B cell (primary cell): ENCODE measurements at regions of chr4 and their contacts with region 1.

Region 1: DNA sequence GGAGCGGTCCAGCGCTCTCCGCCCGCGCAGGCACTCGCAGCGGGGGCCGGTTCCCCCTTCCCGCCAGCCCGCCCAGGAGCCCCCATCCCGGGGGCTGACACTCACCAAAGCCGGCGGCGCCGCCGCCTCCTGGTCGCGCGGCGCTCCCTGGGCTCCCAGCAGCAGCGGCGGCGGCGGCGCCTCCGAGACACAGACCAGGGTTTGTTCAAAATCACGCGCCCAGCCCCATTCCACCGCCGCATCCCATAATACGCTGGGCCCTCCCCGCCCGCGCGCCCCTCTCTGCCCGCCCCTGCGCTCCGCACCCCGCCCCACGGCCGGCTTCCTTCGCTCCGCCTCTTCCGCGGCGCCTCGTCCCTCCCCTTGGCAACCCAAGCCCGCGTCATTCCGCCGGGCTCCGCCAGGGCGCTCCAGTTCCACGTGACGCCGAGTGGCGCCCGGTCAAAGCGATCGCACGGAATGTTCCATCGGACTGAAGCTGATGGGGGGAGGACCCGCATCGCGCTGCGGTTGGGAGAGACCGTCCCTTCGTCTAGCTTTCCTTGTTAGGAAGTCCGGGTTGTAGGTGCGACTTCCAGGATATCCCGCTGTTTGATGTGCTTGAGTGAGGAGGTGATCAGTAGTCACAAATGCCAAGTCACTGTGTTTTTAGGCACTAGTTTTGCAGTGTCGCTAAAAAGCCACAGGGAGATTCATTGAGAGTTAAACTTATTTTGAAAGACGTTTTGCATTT is 2.2 kb upstream of the LIN54 start:
- DNase-seq: peak; percentile 99
- ATAC-seq: peak; percentile 89
- H3K4me3 ChIP-seq: peak overlapping the region; percentile 56 to 87 (median 79)
- H3K4me3 Mint-ChIP-seq: peak overlapping the region; percentile 92
- H3K27ac ChIP-seq: peak overlapping the region; percentile 37 to 72
- H3K27ac Mint-ChIP-seq: peak overlapping the region; percentile 91
- H3K4me1 ChIP-seq: peaks cover 24 to 33% of the 10 kb centered on the region in 2 donors
- H3K4me1 Mint-ChIP-seq: peaks cover 43% of the 10 kb centered on the region
- H3K27me3 ChIP-seq: no peaks in the 10 kb centered on the region
- H3K27me3 Mint-ChIP-seq: no peaks in the 10 kb centered on the region
- CTCF ChIP-seq: peak; percentile 59

Region 2: GRCh38 chr4:82428969-82429727 is 583.7 kb before region 1 on chr4:
- CTCF ChIA-PET with region 1: no interaction called
- POLR2A ChIA-PET with region 1: interaction called, 3 read pairs
- intact Hi-C with region 1: loop called (anchors 1 kb)
- DNase-seq: peak; percentile 97
- ATAC-seq: peak; percentile 64
- H3K4me3 ChIP-seq: peak overlapping the region; percentile 98 to 99 (median 98)
- H3K4me3 Mint-ChIP-seq: peak overlapping the region; percentile 100
- H3K27ac ChIP-seq: peak overlapping the region; percentile 96 to 100
- H3K27ac Mint-ChIP-seq: peak overlapping the region; percentile 100
- H3K4me1 ChIP-seq: peaks cover 27 to 32% of the 10 kb centered on the region in 2 donors
- H3K4me1 Mint-ChIP-seq: peaks cover 48% of the 10 kb centered on the region
- H3K27me3 ChIP-seq: no peaks in the 10 kb centered on the region
- H3K27me3 Mint-ChIP-seq: no peaks in the 10 kb centered on the region
- CTCF ChIP-seq: peak; percentile 97

Region 3: GRCh38 chr4:82890901-82891706 is 121.7 kb before region 1 on chr4 and contains the start of gene SEC31A:
- CTCF ChIA-PET with region 1: no interaction called
- POLR2A ChIA-PET with region 1: no interaction called
- intact Hi-C with region 1: loop called (anchors 1 kb)
- DNase-seq: peak; percentile 98
- ATAC-seq: peak; percentile 92
- H3K4me3 ChIP-seq: peak within 1 kb of the TSS; percentile 76 to 94 (median 85)
- H3K4me3 Mint-ChIP-seq: peak within 1 kb of the TSS; percentile 92
- H3K27ac ChIP-seq: peak within 1 kb of the TSS; percentile 87 to 93
- H3K27ac Mint-ChIP-seq: peak within 1 kb of the TSS; percentile 97
- H3K4me1 ChIP-seq: peaks cover 17 to 18% of the 10 kb centered on the region in 2 donors
- H3K4me1 Mint-ChIP-seq: peaks cover 35% of the 10 kb centered on the region
- H3K27me3 ChIP-seq: no peaks in the 10 kb centered on the region
- H3K27me3 Mint-ChIP-seq: no peaks in the 10 kb centered on the region
- CTCF ChIP-seq: peak; percentile 2
- total RNA-seq, gene SEC31A: 134 and 141 TPM in 2 replicates

Region 4: DNA sequence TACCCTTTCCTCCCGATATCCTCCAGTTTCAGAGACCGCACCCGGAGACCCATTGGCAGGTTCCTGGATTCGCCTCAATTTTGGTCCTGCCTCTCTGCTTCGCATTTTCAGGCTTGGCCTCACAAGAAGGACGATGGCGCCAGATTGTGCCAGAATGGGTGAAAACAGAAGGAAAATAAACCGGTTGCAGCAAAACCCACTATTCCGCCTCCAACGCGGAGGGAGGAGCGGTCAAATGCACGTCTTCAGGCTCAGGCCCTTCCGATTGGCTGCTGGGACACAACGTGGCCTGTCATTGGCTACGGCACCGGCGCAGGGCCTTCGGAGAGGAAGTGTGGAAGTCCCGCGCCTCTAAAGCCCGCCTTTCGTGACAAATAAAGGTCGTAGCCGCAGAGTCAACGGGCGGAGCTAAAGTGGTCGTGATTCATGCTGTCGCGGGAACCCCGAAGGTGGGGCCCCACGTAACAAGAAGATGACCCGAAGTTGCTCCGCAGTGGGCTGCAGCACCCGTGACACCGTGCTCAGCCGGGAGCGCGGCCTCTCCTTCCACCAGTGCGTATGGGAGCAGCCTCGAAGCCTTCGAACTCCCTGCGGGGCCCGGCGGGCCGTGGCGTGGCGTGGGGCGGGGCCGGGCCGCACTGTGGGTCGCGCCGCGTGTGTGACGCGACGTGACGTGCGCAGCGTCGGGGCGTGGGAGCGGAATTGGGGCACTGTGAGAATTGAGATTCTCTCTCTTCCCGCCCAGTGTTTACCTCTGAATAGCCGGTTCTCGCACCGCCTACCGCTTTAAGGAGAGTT is 112.3 kb before region 1 on chr4 and contains the start of gene THAP9:
- CTCF ChIA-PET with region 1: interaction called, 8 read pairs
- POLR2A ChIA-PET with region 1: no interaction called
- intact Hi-C with region 1: loop called (anchors 1 kb)
- DNase-seq: peak; percentile 99
- ATAC-seq: peak; percentile 90
- H3K4me3 ChIP-seq: peak within 1 kb of the TSS; percentile 73 to 92 (median 90)
- H3K4me3 Mint-ChIP-seq: no peak within 1 kb of the TSS
- H3K27ac ChIP-seq: peak within 1 kb of the TSS; percentile 97 to 98
- H3K27ac Mint-ChIP-seq: no peak within 1 kb of the TSS
- H3K4me1 ChIP-seq: peaks cover 22 to 27% of the 10 kb centered on the region in 2 donors
- H3K4me1 Mint-ChIP-seq: peaks cover 11% of the 10 kb centered on the region
- H3K27me3 ChIP-seq: no peaks in the 10 kb centered on the region
- H3K27me3 Mint-ChIP-seq: no peaks in the 10 kb centered on the region
- CTCF ChIP-seq: no peak
- total RNA-seq, gene THAP9: 6.8 and 7.8 TPM in 2 replicates

Region 5: GRCh38 chr4:83034630-83035494 is 22.0 kb after region 1 on chr4 and contains the start of gene COPS4:
- CTCF ChIA-PET with region 1: interaction called, 11 read pairs
- POLR2A ChIA-PET with region 1: interaction called, 13 read pairs
- intact Hi-C with region 1: loop called (anchors 1 kb)
- DNase-seq: peak; percentile 99
- ATAC-seq: peak; percentile 95
- H3K4me3 ChIP-seq: peak within 1 kb of the TSS; percentile 80 to 94 (median 91)
- H3K4me3 Mint-ChIP-seq: peak within 1 kb of the TSS; percentile 98
- H3K27ac ChIP-seq: peak within 1 kb of the TSS; percentile 84 to 86
- H3K27ac Mint-ChIP-seq: peak within 1 kb of the TSS; percentile 98
- H3K4me1 ChIP-seq: peaks cover 10 to 16% of the 10 kb centered on the region in 2 donors
- H3K4me1 Mint-ChIP-seq: peaks cover 34% of the 10 kb centered on the region
- H3K27me3 ChIP-seq: no peaks in the 10 kb centered on the region
- H3K27me3 Mint-ChIP-seq: no peaks in the 10 kb centered on the region
- CTCF ChIP-seq: peak; percentile 34
- total RNA-seq, gene COPS4: 24.5 and 32.8 TPM in 2 replicates

Region 6: DNA sequence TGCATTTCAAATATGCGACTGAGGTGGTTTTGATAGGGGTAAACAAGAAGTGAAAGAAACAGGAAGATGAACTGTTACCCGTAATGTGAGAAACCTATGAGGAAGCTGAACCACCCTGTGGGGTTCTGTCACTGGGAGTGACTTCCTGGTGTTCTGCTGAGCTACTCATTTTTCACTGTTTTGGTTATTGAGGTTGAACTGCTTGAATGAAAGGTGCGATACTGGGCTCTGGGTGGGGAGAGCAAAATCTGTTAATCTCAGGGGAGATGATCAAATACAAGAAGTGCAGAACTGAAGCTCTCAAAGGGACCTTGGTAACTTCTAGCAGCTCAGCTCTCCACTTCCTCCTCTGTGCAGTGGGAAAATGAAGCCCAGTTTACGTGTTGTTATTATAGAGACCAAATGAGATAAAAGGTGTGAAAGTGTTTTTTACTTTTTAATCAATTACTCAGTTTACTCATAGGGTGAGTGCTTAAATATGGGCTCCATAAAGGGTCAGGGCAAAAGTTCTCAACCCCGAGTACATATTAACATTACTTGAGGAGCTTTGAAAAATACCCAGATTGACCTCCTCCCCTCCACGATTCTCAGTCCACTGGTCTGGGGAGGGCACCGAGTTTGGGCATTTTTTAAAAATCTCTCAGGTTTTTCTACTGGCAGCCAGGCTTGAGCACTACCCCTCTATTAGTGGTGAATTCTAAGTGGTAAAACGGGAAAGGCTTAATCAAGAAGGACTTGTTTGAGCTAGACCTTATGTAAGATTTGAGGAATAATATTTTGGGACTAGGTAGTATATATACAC is 205.1 kb after region 1 on chr4:
- CTCF ChIA-PET with region 1: no interaction called
- POLR2A ChIA-PET with region 1: no interaction called
- intact Hi-C with region 1: loop called (anchors 2 kb)
- DNase-seq: peak; percentile 95
- ATAC-seq: peak; percentile 90
- H3K4me3 ChIP-seq: peak overlapping the region in 3 of 5 experiments; percentile 6 to 37 (median 30)
- H3K4me3 Mint-ChIP-seq: peak overlapping the region; percentile 24
- H3K27ac ChIP-seq: peak overlapping the region; percentile 88 to 94
- H3K27ac Mint-ChIP-seq: peak overlapping the region; percentile 92
- H3K4me1 ChIP-seq: peaks cover 90 to 94% of the 10 kb centered on the region in 2 donors
- H3K4me1 Mint-ChIP-seq: peaks cover 87% of the 10 kb centered on the region
- H3K27me3 ChIP-seq: no peaks in the 10 kb centered on the region
- H3K27me3 Mint-ChIP-seq: no peaks in the 10 kb centered on the region
- CTCF ChIP-seq: no peak

Region 7: DNA sequence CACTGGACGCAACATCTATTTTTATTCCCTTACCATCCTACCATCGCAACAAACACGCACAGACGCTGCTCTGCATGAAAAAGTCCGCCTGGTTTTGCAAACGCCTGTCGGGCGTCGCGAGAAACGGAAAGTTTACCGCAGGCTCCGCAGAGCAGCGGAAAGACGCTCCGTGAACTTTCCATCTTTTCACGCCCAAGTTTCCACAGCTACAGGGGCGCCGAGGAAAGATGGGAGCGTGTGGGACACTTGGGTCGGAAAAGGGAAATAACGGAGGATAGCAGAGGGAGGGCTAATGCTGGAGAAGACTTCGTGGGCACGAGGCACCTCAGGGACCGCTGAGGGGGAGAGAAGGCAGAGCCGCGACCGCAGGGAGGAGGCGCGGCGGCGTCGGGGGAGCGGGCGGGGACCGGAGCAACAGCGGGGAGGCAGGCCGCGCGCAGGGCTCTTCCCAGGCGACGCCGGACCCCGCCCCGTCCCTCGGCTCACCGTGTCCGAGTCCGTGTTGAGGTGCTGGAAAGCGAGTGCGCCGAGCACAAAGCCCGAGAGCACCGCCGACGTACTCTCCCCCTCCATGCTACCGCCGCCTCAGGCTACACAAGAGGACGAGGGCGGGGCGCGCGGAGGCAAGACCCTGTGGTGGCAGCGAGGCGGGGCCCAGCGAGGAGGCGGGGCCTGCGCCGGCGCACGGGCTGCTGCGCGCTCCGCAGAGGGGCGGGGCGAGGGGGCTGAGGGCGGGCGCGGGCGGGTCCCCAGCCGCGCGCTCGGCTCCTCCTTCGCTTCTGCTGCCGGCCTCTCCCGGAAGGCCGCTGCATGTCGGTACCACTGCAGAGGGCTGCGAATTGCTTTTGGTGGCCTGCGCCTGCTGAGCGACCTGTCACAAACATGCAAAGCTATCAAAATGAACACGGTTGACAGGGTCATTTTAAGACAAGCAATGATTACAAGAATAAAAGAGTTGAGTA is 471.9 kb after region 1 on chr4 and contains the start of gene ABRAXAS1:
- CTCF ChIA-PET with region 1: no interaction called
- POLR2A ChIA-PET with region 1: no interaction called
- intact Hi-C with region 1: loop called (anchors 1 kb)
- DNase-seq: peak; percentile 97
- ATAC-seq: peak; percentile 97
- H3K4me3 ChIP-seq: peak within 1 kb of the TSS; percentile 71 to 87 (median 77)
- H3K4me3 Mint-ChIP-seq: peak within 1 kb of the TSS; percentile 99
- H3K27ac ChIP-seq: peak within 1 kb of the TSS; percentile 60 to 70
- H3K27ac Mint-ChIP-seq: peak within 1 kb of the TSS; percentile 95
- H3K4me1 ChIP-seq: peaks cover 10 to 17% of the 10 kb centered on the region in 2 donors
- H3K4me1 Mint-ChIP-seq: peaks cover 21% of the 10 kb centered on the region
- H3K27me3 ChIP-seq: no peaks in the 10 kb centered on the region
- H3K27me3 Mint-ChIP-seq: no peaks in the 10 kb centered on the region
- CTCF ChIP-seq: no peak
- total RNA-seq, gene ABRAXAS1: 34.4 and 38.4 TPM in 2 replicates